Caki2 (cell line): ENCODE measurements at regions of chr7 and their contacts with region 1.

Region 1: DNA sequence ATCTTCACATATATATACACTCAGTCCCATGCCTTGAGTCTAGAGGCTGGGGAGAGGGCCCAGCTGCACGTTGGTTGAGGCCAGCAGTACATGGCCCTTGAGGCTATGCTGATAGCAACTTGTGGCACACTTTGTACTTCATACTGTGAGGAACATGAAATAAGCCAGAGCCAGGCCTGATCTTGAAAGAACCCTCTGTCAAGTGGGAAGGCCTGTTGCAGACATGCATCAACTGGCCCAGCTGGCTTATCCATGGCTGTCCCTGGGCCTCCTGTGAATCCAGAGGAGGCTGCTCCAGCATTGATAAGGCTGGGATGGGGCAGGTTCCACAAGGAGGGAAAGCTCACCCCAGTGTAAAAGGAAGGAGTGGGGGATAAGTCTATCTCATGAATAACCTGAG is 140.4 kb downstream of the NRF1 start:
- DNase-seq: no peak

Region 2: DNA sequence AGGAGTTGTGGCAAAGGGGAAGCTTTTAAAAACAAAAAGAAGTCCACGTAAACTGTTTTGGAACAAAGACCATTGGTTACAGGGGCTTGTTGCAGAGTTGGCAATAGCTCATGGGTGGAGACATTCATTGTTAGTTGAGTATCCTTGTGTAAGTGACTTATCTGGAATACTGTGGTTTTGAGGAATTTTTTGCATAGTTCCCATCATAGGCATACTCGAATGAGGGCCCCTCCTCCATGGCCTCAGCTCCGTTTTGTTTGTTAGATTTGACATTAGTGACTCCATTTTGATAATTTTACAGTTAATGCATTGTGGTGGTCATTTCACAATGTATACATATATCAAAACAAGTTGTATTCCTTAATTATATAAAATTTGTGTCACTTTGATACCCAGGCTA is 262.4 kb before region 1 on chr7:
- in situ Hi-C with region 1: loop called (anchors 10 kb)
- DNase-seq: no peak

Region 3: DNA sequence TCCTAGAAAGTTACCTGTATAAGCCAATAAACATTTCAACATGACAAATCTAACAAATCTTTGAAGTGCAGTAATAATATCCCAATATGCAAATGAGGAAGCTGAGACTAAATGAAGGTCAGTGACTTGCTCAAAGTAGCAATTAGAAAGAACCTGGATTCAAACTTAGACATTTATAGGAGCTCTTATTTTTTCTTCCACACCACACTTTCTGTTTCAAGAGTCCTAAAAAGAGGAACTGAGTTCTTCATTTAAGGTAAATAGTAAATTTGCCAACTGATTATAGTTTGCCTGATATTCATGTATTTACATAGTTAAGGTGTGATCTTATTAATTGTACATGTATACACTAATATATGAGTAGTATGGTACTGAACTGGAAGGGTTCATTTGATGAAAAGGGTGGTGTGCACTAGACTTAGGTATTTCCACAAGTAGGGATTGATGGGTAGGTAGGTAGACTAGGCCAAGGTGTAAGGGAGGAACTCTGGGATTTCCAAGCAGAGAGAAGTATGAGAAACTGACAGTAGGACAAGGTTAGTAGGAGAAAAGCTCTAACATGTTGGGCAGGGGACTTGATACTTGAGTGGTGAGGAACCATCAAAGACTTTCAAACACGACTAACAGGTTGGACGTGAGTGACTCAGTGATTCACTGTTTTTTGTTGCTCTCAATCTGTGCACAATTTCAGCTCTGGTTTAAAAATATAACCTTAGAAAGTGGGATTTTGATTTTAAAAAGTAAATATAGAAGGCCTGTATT is 362.6 kb after region 1 on chr7:
- in situ Hi-C with region 1: no loop called
- DNase-seq: no peak

Region 4: DNA sequence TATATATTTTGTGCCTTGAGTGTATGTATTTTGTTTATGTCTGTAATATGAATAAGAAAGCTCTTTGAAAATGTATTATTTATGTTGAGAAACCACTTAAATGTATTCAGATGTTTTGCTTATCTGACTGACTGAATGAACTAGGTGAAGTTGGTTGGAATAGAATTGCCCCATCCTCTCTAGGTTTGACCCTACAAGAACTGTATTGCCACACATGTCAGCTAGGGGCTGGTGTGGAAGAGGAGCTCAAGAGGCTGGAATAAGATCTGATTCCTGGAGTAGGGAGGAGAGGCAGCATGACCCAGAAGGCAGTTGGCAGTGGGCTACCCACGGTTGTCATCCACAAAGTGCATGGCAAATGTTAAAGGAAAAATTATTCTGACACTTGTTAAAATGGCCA is 464.8 kb after region 1 on chr7:
- in situ Hi-C with region 1: no loop called
- DNase-seq: no peak